ENCODE measurements at regions of chr9 and their contacts with region 1.

Region 1: GRCh38 chr9:88388172-88388885 is at the start of gene SPIN1:
- DNase-seq: peak; percentile 26 to 80 (median 54)
- H3K4me3 ChIP-seq: peak within 1 kb of the TSS; percentile 66 to 97 (median 88)
- H3K27ac ChIP-seq: peak within 1 kb of the TSS; percentile 78 to 99 (median 96)
- H3K27me3 ChIP-seq: no peaks in the 10 kb centered on the region
- CTCF ChIP-seq: peak in 32 of 56 donors; percentile 2 to 74 (median 39)
- total RNA-seq, gene SPIN1: 96.6 to 238 (median 174) TPM

Region 2: GRCh38 chr9:87725900-87726709 is 662.2 kb before region 1 on chr9 and contains the start of gene CTSL:
- intact Hi-C with region 1: loop called (anchors 5 to 10 kb)
- DNase-seq: peak; percentile 93 to 97 (median 96)
- H3K4me3 ChIP-seq: peak within 1 kb of the TSS; percentile 61 to 95 (median 86)
- H3K27ac ChIP-seq: peak within 1 kb of the TSS; percentile 82 to 99 (median 97)
- H3K27me3 ChIP-seq: no peaks in the 10 kb centered on the region
- CTCF ChIP-seq: peak in 44 of 56 donors; percentile 3 to 64 (median 33)
- total RNA-seq, gene CTSL: 39.8 to 104 (median 62.7) TPM

Region 3: GRCh38 chr9:87959916-87960581 is 428.3 kb before region 1 on chr9:
- intact Hi-C with region 1: loop called in 1 of 2 experiments (anchors 10 kb)
- DNase-seq: no peak
- H3K4me3 ChIP-seq: no peak overlapping the region
- H3K27ac ChIP-seq: no peak overlapping the region
- H3K27me3 ChIP-seq: no peaks in the 10 kb centered on the region
- CTCF ChIP-seq: no peak

Region 4: GRCh38 chr9:87973730-87974292 is 414.5 kb before region 1 on chr9:
- intact Hi-C with region 1: loop called (anchors 5 to 10 kb)
- DNase-seq: peak in 1 of 10 donors; percentile 47
- H3K4me3 ChIP-seq: peak overlapping the region; percentile 53 to 93 (median 76)
- H3K27ac ChIP-seq: peak overlapping the region in 56 of 59 donors; percentile 16 to 94 (median 86)
- H3K27me3 ChIP-seq: no peaks in the 10 kb centered on the region
- CTCF ChIP-seq: no peak

Region 5: GRCh38 chr9:88076286-88077090 is 311.8 kb before region 1 on chr9:
- intact Hi-C with region 1: loop called (anchors 2 to 5 kb)
- DNase-seq: peak; percentile 39 to 78 (median 67)
- H3K4me3 ChIP-seq: peak overlapping the region; percentile 51 to 84 (median 68)
- H3K27ac ChIP-seq: peak overlapping the region in 58 of 59 donors; percentile 41 to 96 (median 86)
- H3K27me3 ChIP-seq: no peaks in the 10 kb centered on the region
- CTCF ChIP-seq: peak in 21 of 56 donors; percentile 3 to 30 (median 12)

Region 6: GRCh38 chr9:88488166-88488565 is 99.8 kb after region 1 on chr9:
- intact Hi-C with region 1: loop called in 1 of 2 experiments (anchors 5 kb)
- DNase-seq: no peak
- H3K4me3 ChIP-seq: no peak overlapping the region
- H3K27ac ChIP-seq: no peak overlapping the region
- H3K27me3 ChIP-seq: no peaks in the 10 kb centered on the region
- CTCF ChIP-seq: no peak

Region 7: GRCh38 chr9:88578121-88579054 is 190.1 kb after region 1 on chr9:
- intact Hi-C with region 1: loop called (anchors 5 kb)
- DNase-seq: peak; percentile 65 to 88 (median 76)
- H3K4me3 ChIP-seq: peak overlapping the region in 24 of 59 donors; percentile 2 to 46 (median 27)
- H3K27ac ChIP-seq: no peak overlapping the region
- H3K27me3 ChIP-seq: no peaks in the 10 kb centered on the region
- CTCF ChIP-seq: peak; percentile 86 to 99 (median 96)

Region 8: DNA sequence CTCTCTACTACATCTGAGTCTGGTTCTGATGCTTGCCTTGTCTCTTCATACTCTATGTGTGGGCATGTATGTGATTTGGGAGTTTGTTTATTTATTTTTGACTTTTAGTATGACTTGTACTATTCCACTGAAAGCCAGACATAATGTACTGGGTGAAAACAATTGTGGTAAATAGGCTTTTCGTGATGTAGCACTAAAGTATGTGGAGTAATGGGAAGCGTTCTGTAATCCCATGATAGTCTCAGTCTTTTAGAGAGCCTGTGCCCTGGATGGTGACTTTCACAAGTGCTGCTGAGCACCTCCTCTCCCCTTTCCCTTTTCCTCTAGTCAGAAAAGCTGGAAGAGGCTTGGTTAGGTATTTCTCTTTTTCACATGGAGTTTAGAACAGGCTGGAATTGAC is 517.2 kb after region 1 on chr9:
- intact Hi-C with region 1: no loop called
- DNase-seq: no peak
- H3K4me3 ChIP-seq: no peak overlapping the region
- H3K27ac ChIP-seq: no peak overlapping the region
- H3K27me3 ChIP-seq: peaks cover 0 to 5% (median 0%) of the 10 kb centered on the region in 45 donors
- CTCF ChIP-seq: no peak

Measured in dorsolateral prefrontal cortex (tissue), 120 donors.